MCF 10A (cell line): ENCODE measurements at regions of chr16 and their contacts with region 1.

Region 1: GRCh38 chr16:53913099-53913870 is 209.3 kb downstream of the FTO start:
- DNase-seq: peak; percentile 97
- H3K4me3 Mint-ChIP-seq: no peak overlapping the region
- H3K27ac Mint-ChIP-seq: peak overlapping the region; percentile 35
- H3K4me1 Mint-ChIP-seq: peaks cover 16% of the 10 kb centered on the region
- H3K27me3 Mint-ChIP-seq: no peaks in the 10 kb centered on the region
- CTCF ChIP-seq: no peak

Region 2: DNA sequence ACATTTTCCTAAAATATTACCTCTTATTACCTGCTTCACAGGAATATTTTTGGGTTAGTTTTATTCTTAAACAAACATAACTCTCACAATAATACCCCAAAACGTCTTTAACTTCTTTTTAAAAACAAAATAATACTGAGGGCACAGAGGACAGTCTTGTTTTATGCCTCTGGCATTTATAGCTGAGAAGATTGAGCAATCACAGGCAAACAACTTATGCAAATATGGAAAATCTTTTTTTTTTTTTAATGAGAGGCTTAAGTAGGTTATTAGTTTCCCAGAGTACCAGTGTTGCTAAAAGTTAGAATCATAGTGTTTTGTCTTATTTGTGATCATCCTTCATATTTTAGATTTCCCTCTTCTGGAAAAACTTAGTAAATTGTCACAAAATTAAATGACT is 14.3 kb before region 1 on chr16:
- CTCF ChIA-PET with region 1: interaction called, 3 read pairs
- POLR2A ChIA-PET with region 1: interaction called, 14 read pairs
- intact Hi-C with region 1: no loop called
- DNase-seq: peak; percentile 15
- H3K4me3 Mint-ChIP-seq: no peak overlapping the region
- H3K27ac Mint-ChIP-seq: peak overlapping the region; percentile 3
- H3K4me1 Mint-ChIP-seq: peaks cover 6% of the 10 kb centered on the region
- H3K27me3 Mint-ChIP-seq: no peaks in the 10 kb centered on the region
- CTCF ChIP-seq: no peak

Region 3: GRCh38 chr16:53933407-53933806 is 20.1 kb after region 1 on chr16:
- CTCF ChIA-PET with region 1: no interaction called
- POLR2A ChIA-PET with region 1: no interaction called
- intact Hi-C with region 1: no loop called
- DNase-seq: no peak
- H3K4me3 Mint-ChIP-seq: no peak overlapping the region
- H3K27ac Mint-ChIP-seq: no peak overlapping the region
- H3K4me1 Mint-ChIP-seq: no peaks in the 10 kb centered on the region
- H3K27me3 Mint-ChIP-seq: no peaks in the 10 kb centered on the region
- CTCF ChIP-seq: no peak

Region 4: GRCh38 chr16:54080524-54081008 is 167.3 kb after region 1 on chr16:
- CTCF ChIA-PET with region 1: no interaction called
- POLR2A ChIA-PET with region 1: interaction called, 15 read pairs
- intact Hi-C with region 1: no loop called
- DNase-seq: peak; percentile 99
- H3K4me3 Mint-ChIP-seq: peak overlapping the region; percentile 54
- H3K27ac Mint-ChIP-seq: peak overlapping the region; percentile 99
- H3K4me1 Mint-ChIP-seq: peaks cover 41% of the 10 kb centered on the region
- H3K27me3 Mint-ChIP-seq: no peaks in the 10 kb centered on the region
- CTCF ChIP-seq: no peak